Activated naive CD4-positive, alpha-beta T cell treated with anti-CD3 and anti-CD28 coated beads, Interleukin-2, amount 10 ng/mL, durations not matched to agents 7 days and 5 days (primary cell): ENCODE measurements at regions of chr15 and their contacts with region 1.

Region 1: DNA sequence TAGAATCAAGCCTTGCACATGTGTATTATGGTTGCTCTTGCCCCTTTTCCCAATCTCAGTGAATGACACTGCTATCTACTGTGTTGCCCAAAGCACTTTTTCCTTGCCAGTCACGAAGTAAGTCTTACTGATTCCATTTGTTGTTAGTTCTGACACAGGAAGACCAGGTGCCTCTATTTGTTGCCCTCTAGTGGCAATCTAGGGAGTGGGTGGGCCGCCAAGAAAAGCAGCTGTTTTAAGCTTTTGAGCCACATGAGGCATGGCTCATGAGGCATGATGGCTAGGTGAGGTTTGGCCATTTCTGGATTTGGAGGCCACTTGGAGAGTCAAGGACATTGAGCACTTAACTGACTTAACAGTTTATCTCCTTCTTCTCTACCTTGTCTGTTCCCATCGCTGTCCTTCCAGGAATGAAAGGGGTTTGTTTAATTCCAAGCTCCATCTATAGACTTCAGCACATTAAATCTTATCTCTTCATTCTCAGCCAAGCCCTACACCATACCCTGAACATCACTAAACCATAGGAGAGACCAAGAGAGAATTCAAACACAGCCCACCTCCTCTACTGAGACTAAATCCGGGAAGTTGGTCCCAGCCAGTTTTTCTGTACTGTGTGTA is 103.1 kb downstream of the HCN4 start:
- DNase-seq: peak; percentile 72
- H3K4me3 Mint-ChIP-seq: no peak overlapping the region
- H3K27ac Mint-ChIP-seq: no peak overlapping the region
- H3K4me1 Mint-ChIP-seq: no peaks in the 10 kb centered on the region
- H3K27me3 Mint-ChIP-seq: no peaks in the 10 kb centered on the region

Region 2: GRCh38 chr15:73240866-73241499 is 24.7 kb before region 1 on chr15:
- CTCF ChIA-PET with region 1: interaction called, 55 read pairs
- DNase-seq: peak; percentile 82
- H3K4me3 Mint-ChIP-seq: no peak overlapping the region
- H3K27ac Mint-ChIP-seq: no peak overlapping the region
- H3K4me1 Mint-ChIP-seq: no peaks in the 10 kb centered on the region
- H3K27me3 Mint-ChIP-seq: no peaks in the 10 kb centered on the region